GM10248 (cell line): ENCODE measurements at regions of chr4 and their contacts with region 1.

Region 1: DNA sequence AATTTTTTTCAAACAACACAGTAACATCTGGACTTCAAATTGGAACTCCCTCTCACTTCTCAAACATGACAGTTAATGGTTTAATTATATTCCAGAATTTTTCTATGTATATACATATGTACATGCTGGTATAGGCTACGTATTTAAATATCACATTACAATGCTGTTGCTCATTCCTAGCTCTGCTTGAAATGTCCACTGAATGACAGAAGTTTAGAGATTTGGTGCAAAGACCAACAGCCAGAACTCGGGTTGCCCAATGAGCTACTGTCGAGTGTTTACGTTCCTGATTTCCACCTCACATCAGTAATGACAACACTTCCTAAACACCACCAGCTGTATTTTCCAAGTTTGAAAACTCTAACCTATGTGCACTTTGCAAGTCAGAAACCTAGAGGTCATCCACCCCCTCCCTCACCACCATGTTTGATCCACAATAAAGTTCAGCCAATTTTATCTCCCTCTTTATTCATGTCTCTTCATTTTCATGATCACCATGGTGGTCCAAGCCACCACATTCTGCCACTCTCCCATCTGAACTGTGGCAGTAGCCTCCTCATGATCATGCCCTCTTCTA is 49.3 kb upstream of the RPL34 start:
- DNase-seq: no peak
- CTCF ChIP-seq: no peak

Region 2: GRCh38 chr4:108030332-108030731 is 540.7 kb before region 1 on chr4:
- CTCF ChIA-PET with region 1: interaction called, 113 read pairs
- POLR2A ChIA-PET with region 1: no interaction called
- DNase-seq: peak; percentile 76
- CTCF ChIP-seq: peak; percentile 84

Region 3: DNA sequence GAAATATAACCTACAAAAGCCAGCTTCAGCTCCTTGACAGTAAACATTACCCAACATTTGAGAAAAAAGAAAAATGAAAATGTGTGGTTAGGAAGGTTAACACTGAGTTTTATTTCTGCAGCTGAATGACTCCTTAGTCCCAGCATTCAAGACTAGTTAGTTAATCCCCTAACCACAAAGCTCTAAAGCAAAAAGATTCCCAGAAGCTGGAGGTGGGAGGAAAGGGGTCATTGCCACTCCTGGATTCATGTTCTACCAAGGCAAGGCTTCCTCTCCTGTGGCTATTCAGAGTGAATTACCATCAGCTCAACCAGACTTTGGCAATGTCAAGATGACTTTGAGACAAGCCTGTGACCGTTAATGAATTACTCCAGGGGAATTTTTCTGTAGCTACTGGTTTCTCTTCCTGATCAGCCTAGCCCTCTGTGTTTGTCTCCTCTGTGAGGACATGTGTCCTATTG is 517.8 kb before region 1 on chr4:
- CTCF ChIA-PET with region 1: interaction called, 12 read pairs
- POLR2A ChIA-PET with region 1: no interaction called
- DNase-seq: peak; percentile 70
- CTCF ChIP-seq: no peak

Region 4: DNA sequence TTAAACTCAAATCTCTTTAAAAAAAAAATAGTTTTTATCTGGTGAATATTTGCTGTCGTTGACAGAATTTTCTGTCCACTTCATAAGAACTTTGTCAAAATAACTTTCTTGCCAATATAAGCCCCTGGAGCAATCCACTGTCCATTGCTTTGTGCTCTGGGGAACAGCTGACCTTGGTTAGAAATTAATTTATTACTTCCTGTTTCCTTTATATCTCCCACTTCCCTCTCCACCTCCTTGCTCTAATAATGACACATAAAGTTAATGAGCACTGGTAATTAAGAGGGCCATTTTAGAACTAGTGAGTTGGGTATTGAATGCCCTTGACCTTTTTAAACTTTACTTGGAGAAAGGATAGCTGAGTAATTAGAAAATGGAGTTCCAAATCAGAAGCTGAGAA is 251.0 kb before region 1 on chr4:
- CTCF ChIA-PET with region 1: no interaction called
- POLR2A ChIA-PET with region 1: no interaction called
- DNase-seq: no peak
- CTCF ChIP-seq: no peak

Region 5: GRCh38 chr4:108502356-108502755 is 68.7 kb before region 1 on chr4:
- CTCF ChIA-PET with region 1: no interaction called
- POLR2A ChIA-PET with region 1: no interaction called
- DNase-seq: no peak
- CTCF ChIP-seq: no peak

Region 6: DNA sequence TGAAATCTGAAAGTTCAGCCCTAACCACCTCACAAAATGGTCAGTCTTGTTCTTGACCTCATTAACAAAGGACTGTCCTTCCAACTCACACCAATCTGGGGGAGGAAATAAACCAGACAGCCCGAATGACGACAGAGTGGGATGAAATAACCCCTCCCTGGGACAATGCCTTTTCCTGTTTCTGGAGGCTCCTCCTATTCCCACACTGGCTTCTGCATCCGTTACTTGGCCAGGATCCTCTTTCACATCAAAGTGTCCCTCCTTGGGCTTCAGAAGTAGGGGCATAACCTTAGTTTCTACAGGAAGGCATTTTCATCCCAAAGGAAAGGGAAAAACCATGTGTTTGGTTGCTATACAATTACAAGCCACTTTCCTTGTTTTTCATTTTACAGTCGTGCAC is 10.5 kb before region 1 on chr4:
- CTCF ChIA-PET with region 1: interaction called, 20 read pairs
- POLR2A ChIA-PET with region 1: no interaction called
- DNase-seq: no peak
- CTCF ChIP-seq: no peak